ENCODE measurements at regions of chr1 and their contacts with region 1.

Region 1: DNA sequence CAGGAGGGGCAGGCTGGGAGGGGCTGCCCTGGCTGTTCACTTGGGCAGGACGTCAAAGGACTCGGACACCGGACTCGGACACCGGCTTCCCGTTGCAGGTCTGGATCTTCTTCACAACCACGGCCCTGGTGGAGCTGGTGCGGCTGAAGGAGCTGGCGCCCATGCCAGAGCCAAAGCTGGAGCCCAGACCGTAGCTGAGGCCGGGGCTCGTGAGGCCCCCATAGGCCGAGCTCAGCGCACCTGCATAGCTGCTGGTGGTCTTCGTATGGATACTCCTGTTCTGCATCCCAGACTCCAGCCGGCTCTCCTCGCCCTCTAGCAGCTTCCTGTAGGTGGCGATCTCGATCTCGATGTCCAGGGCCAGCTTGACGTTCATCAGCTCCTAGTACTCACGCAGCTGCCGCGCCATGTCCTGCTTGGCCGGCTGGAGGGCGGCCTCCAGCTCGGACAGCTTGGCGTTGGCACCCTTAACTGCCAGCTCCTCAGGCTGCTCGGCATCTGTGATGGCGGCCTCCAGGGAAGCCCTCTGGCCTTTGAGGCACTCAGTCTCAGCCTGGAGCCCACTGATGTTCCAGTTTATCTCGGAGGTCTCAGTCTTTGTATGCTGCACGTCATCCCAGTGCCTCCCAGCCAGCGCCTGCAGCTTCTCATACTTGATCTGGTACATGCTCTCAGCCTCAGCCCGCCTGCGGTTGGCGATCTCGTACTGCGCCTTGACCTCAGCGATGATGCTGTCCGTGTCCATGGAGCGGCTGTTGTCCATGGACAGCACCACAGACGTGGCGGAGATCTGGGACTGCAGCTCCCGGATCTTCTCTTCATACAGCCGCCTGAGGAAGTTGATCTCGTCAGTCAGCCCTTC is 15.1 kb upstream of the KLF17 start:
- DNase-seq: peak; percentile 84
- ATAC-seq: peak; percentile 30
- H3K4me3 Mint-ChIP-seq: no peak overlapping the region
- H3K27ac Mint-ChIP-seq: no peak overlapping the region
- H3K4me1 Mint-ChIP-seq: peaks cover 8% of the 10 kb centered on the region
- H3K27me3 Mint-ChIP-seq: peaks cover 8% of the 10 kb centered on the region
- CTCF ChIP-seq: no peak

Region 2: GRCh38 chr1:44089371-44090049 is 14.0 kb before region 1 on chr1:
- CTCF ChIA-PET with region 1: interaction called, 21 read pairs
- POLR2A ChIA-PET with region 1: no interaction called
- DNase-seq: peak; percentile 21
- ATAC-seq: peak; percentile 43
- H3K4me3 Mint-ChIP-seq: no peak overlapping the region
- H3K27ac Mint-ChIP-seq: no peak overlapping the region
- H3K4me1 Mint-ChIP-seq: peaks cover 26% of the 10 kb centered on the region
- H3K27me3 Mint-ChIP-seq: peaks cover 5% of the 10 kb centered on the region; the same call in 1 of the 2 replicates
- CTCF ChIP-seq: no peak

Region 3: DNA sequence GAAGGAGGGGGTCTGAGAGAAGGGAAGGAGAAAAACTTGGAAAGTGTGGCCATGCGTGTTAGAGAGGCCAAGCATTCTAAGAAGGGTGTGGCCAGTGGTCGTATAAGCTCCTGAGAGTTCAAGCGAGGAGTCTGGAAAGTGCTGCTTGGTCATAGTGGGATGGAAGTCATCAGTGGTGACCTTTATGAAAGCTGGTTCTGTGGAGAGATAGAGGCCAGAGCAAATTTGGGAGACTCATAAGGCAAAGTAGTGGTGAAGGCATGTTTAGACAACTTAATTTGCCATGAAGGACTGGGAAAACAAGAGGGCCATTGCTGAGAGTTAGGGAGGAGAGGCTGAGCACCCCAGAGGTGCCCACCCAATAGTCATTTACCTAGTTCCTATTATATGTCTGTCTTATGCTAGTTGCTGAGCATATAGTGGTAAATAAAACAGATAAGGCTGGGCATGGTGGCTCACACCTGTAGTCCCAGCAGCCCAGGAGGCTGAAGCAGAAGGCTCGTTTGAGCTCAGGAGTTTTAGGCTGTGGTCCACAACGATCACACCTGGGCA is 17.0 kb after region 1 on chr1:
- CTCF ChIA-PET with region 1: interaction called, 13 read pairs
- POLR2A ChIA-PET with region 1: no interaction called
- DNase-seq: no peak
- ATAC-seq: no peak
- H3K4me3 Mint-ChIP-seq: no peak overlapping the region
- H3K27ac Mint-ChIP-seq: no peak overlapping the region
- H3K4me1 Mint-ChIP-seq: peaks cover 14% of the 10 kb centered on the region
- H3K27me3 Mint-ChIP-seq: peaks cover 11% of the 10 kb centered on the region
- CTCF ChIP-seq: no peak

Region 4: DNA sequence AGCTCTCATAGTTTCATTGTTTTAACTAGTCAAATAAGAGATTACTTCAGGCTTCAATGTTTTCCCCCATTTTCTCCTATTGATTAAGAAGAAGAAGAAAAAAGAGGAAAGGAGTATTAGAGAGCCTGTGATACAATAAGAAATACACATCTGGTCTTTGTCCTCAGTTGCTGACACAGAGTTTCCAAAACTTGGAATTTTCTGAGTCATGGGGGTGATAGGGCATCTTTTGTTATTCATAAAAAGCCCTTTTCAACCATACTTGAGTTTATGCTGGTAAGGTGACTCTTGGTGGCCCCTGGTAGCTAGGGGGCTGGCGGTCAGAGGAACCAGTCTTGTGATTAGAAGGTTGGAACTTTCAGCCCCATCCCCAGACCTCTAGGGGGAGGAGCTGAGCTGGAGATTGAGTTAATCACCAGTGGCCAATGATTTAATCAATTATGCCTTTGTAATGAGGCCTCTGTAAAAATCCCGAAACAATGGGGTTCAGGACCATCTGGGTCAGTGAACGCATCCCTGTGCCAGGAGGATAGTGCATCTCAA is 66.9 kb after region 1 on chr1:
- CTCF ChIA-PET with region 1: interaction called, 12 read pairs
- POLR2A ChIA-PET with region 1: no interaction called
- DNase-seq: no peak
- ATAC-seq: peak; percentile 52
- H3K4me3 Mint-ChIP-seq: no peak overlapping the region
- H3K27ac Mint-ChIP-seq: no peak overlapping the region
- H3K4me1 Mint-ChIP-seq: no peaks in the 10 kb centered on the region
- H3K27me3 Mint-ChIP-seq: peaks cover 15% of the 10 kb centered on the region
- CTCF ChIP-seq: no peak

Region 5: DNA sequence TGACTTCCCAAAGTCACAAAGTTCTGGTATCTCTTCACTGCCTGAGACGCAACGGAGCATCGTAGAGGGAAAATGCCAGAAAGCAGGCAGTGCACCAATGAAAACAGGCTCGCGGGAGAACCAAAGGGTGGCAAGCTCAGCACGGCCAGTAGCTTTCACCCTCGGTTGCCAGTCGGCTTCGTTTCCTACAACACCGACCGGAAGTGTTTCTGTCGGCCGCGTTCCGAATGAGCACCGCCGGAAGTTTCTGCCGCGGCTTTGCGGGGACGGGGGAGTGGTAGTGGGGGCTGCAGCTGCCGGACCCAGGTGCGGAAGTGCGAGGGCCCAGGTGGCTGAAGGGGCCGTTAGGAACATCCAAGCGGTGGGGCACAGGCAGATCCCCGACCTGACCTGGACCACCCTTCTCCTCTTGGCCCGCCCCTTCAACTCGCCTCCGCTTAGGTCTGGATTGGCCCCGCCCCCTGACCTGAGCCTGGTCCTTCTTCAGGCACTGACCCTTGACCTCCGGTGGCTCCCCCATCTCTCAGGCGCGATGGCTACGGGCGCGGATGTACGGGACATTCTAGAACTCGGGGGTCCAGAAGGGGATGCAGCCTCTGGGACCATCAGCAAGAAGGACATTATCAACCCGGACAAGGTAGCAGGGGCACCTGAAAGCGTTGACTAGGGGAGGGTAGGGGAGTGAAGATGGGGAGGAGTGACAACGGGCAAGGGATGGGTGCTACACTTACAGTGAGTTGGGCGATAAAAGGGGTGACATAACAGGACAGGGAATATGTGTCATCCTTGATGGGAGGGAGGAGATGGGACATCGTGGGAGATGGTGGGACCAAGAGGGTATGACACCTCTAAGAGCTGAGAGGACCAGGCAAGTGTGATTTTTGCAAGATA is 110.0 kb after region 1 on chr1 and contains the start of gene DMAP1:
- CTCF ChIA-PET with region 1: interaction called, 22 read pairs
- POLR2A ChIA-PET with region 1: no interaction called
- DNase-seq: peak; percentile 83
- ATAC-seq: peak; percentile 85
- H3K4me3 Mint-ChIP-seq: peak within 1 kb of the TSS; percentile 96
- H3K27ac Mint-ChIP-seq: no peak within 1 kb of the TSS
- H3K4me1 Mint-ChIP-seq: peaks cover 9% of the 10 kb centered on the region
- H3K27me3 Mint-ChIP-seq: peaks cover 18% of the 10 kb centered on the region
- CTCF ChIP-seq: no peak
- total RNA-seq, gene DMAP1: 40.9 to 44.4 TPM (median 42.3 TPM) in 3 replicates

Region 6: GRCh38 chr1:44220001-44220733 is 116.7 kb after region 1 on chr1:
- CTCF ChIA-PET with region 1: interaction called, 22 read pairs
- POLR2A ChIA-PET with region 1: no interaction called
- DNase-seq: no peak
- ATAC-seq: no peak
- H3K4me3 Mint-ChIP-seq: no peak overlapping the region
- H3K27ac Mint-ChIP-seq: no peak overlapping the region
- H3K4me1 Mint-ChIP-seq: no peaks in the 10 kb centered on the region
- H3K27me3 Mint-ChIP-seq: no peaks in the 10 kb centered on the region; the same call in 1 of the 2 replicates
- CTCF ChIP-seq: no peak

Measured in WTC11 (cell line).